ENCODE measurements at regions of chr9 and their contacts with region 1.

Region 1: GRCh38 chr9:129884220-129885017 is 49.2 kb downstream of the USP20 start:
- DNase-seq: peak; percentile 99
- ATAC-seq: peak; percentile 63
- H3K4me3 Mint-ChIP-seq: peak overlapping the region; percentile 92
- H3K27ac Mint-ChIP-seq: peak overlapping the region; percentile 98
- H3K4me1 Mint-ChIP-seq: peaks cover 45% of the 10 kb centered on the region
- H3K27me3 Mint-ChIP-seq: no peaks in the 10 kb centered on the region

Region 2: DNA sequence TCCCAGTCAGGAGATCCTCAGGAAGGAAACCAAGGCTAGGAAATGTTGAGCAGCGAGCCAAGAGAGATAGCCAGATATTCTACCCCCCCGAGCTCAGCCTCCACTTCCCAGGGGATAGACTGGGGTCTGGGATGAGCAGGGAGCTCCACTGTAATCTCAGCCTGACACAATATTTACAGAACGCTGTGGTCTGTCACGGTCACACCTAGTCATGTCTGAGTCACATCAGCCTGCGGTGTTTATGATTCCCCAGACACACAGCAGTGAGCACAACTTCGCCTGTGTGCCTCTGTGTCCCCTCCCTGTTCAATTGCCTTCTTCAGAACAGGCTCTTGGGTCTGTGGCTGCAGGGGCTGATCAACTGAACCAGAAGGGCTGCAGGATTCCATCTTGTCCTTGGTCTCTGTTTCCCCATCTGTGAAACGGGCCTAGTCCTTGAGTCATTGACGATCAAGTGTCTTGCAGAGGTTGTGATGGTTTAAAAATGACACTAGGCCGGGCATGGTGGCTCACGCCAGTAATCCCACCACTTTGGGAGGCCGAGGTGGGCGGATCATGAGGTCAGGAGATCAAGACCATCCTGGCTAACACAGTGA is 227.5 kb before region 1 on chr9:
- CTCF ChIA-PET with region 1: no interaction called
- DNase-seq: no peak
- ATAC-seq: peak; percentile 23
- H3K4me3 Mint-ChIP-seq: no peak overlapping the region
- H3K27ac Mint-ChIP-seq: no peak overlapping the region
- H3K4me1 Mint-ChIP-seq: no peaks in the 10 kb centered on the region
- H3K27me3 Mint-ChIP-seq: peaks cover 7% of the 10 kb centered on the region

Region 3: DNA sequence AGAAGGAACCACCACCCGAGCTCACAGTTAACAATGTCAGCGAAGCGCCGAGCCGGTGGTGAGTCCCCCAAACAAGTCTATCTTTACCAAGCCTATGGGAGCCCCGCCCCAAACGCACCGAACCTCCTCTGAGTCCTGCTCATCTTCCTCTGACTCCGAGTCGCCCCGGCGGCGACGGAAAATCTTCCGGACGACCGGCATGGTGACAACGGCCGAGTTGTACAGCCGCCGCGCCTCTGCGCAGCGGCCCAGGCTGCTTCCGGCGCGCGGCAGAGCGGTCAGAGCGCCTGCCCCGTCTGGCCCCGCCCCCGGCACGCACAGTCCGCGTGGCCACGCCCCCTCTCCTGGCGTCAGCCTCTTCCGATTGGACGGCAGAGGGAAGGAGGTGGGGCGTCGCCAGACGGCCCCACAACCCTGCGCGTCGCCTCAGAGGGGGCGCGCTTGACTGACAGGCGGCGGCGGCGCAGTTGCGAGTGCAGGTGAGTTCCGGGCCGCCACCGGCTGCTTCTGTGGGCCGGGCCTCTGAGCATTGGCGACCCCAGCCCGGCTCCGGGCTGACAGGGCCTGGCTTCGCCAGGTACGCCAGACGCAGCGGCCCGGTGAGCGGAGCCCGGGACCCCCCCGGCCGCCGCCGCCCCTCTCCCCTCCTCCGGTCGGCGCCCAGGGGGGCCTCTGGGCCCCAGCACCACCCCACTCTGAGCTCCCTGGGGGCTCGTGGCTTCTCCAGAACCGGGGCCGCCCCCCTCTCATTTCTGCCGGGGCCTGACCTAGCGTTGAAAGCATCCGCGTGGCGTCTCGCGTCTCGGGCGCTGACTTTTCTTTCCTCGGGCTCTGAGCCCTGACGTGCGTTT is 49.2 kb before region 1 on chr9 and contains the starts of genes C9orf78 and USP20:
- CTCF ChIA-PET with region 1: interaction called, 27 read pairs
- DNase-seq: peak; percentile 97
- ATAC-seq: peak; percentile 92
- H3K4me3 Mint-ChIP-seq: peak within 1 kb of the TSS; percentile 99
- H3K27ac Mint-ChIP-seq: peak within 1 kb of the TSS; percentile 98
- H3K4me1 Mint-ChIP-seq: peaks cover 60% of the 10 kb centered on the region
- H3K27me3 Mint-ChIP-seq: no peaks in the 10 kb centered on the region
- total RNA-seq, gene C9orf78: 77.7 to 90.2 TPM
- total RNA-seq, gene USP20: 114 to 155 TPM

Region 4: DNA sequence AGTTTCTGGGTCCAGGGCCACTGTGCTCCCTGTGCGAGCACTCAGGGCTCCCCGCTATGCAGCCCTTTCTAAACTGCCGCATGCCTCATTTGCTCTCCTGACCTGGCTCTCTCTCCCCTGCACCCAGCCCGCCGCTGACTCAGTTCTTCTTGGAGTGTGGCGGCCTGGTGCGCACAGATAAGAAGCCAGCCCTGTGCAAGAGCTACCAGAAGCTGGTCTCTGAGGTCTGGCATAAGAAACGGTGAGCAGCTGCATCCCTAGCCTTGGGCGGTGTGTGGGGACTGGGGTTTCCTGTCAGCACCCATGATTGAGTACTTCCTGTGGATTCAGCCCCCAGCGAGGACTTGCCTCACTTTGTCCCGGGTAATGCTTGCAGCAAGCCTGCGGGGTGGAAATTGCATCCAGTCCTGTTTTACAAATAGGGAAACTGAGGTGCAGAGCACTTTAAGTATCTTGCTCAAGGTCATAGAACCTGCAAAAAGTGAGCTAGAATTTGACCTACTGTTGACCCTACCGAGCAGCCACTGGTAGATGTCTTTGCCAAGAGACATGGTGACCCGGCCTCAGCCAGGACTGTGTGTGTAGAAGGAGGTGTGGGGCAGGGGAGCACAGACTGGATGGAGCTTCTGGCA is 21.2 kb before region 1 on chr9:
- CTCF ChIA-PET with region 1: interaction called, 110 read pairs
- DNase-seq: peak; percentile 97
- ATAC-seq: peak; percentile 81
- H3K4me3 Mint-ChIP-seq: peak overlapping the region; percentile 55
- H3K27ac Mint-ChIP-seq: peak overlapping the region; percentile 90
- H3K4me1 Mint-ChIP-seq: peaks cover 90% of the 10 kb centered on the region
- H3K27me3 Mint-ChIP-seq: no peaks in the 10 kb centered on the region

Region 5: GRCh38 chr9:129906298-129906697 is 21.9 kb after region 1 on chr9:
- CTCF ChIA-PET with region 1: no interaction called
- DNase-seq: no peak
- ATAC-seq: no peak
- H3K4me3 Mint-ChIP-seq: no peak overlapping the region
- H3K27ac Mint-ChIP-seq: peak overlapping the region; percentile 35
- H3K4me1 Mint-ChIP-seq: peaks cover 34% of the 10 kb centered on the region
- H3K27me3 Mint-ChIP-seq: no peaks in the 10 kb centered on the region

Region 6: GRCh38 chr9:129932303-129933151 is 48.1 kb after region 1 on chr9:
- CTCF ChIA-PET with region 1: interaction called, 10 read pairs
- DNase-seq: no peak
- ATAC-seq: peak; percentile 31
- H3K4me3 Mint-ChIP-seq: peak overlapping the region; percentile 62
- H3K27ac Mint-ChIP-seq: peak overlapping the region; percentile 88
- H3K4me1 Mint-ChIP-seq: peaks cover 60% of the 10 kb centered on the region
- H3K27me3 Mint-ChIP-seq: no peaks in the 10 kb centered on the region

Region 7: DNA sequence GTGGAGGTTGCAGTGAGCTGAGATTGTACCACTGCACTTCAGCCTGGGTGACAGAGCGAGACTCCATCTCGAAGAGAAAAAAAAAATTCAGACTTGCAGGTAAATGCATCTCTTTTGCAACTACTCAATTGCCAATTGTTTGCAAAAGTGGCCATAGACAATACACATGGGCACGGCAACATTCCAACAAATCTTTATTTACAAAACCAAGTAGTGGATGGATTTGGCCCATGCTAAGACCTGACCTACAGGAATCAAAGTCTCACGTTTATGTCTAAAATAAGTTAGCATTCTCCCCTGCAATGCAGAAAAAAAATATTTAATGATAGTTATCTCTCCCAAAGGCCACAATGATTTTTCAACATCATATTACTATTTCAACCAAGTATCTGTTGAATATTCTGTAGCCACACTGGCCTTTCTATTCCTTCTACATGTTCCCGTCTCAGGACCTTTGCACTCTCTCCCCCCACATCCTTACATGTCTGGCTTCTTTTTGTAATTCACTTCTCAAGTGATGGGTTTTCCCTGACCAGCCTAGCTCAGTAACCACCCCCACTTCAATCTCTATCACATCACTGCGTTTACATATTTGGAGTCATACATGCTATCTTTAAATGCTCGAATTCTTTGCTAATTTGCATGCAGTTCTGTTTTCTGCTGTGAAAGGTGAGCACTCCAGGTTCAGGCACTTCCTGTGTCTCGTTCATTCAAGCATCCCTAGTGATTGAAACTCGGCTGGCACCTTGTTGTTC is 104.4 kb after region 1 on chr9:
- CTCF ChIA-PET with region 1: interaction called, 10 read pairs
- DNase-seq: no peak
- ATAC-seq: no peak
- H3K4me3 Mint-ChIP-seq: no peak overlapping the region
- H3K27ac Mint-ChIP-seq: peak overlapping the region; percentile 73
- H3K4me1 Mint-ChIP-seq: peaks cover 71% of the 10 kb centered on the region
- H3K27me3 Mint-ChIP-seq: no peaks in the 10 kb centered on the region

Region 8: DNA sequence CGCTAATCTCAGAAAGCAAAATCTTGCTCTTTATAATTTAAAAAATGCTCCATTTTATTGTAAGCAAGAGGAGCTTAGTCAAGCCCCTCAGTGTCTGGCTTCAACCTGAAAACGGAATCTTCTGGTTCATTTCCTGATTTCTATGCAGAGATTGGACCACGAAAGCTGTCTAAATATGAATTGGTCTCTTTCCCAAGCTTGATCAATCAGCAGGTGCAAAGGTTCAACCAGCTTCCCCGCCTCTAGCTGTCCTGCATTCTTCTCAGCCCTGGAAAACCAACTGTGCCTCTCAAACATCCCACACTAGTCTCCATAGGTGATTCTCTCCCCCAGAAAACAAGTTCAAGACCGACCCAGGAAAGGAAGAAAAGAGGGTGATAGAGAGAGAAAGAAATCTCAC is 124.1 kb after region 1 on chr9:
- CTCF ChIA-PET with region 1: interaction called, 11 read pairs
- DNase-seq: no peak
- ATAC-seq: no peak
- H3K4me3 Mint-ChIP-seq: peak overlapping the region; percentile 4
- H3K27ac Mint-ChIP-seq: peak overlapping the region; percentile 94
- H3K4me1 Mint-ChIP-seq: peaks cover 69% of the 10 kb centered on the region
- H3K27me3 Mint-ChIP-seq: no peaks in the 10 kb centered on the region

Region 9: GRCh38 chr9:130042833-130043653 is 158.6 kb after region 1 on chr9 and contains the start of gene FNBP1:
- CTCF ChIA-PET with region 1: interaction called, 20 read pairs
- DNase-seq: peak; percentile 83
- ATAC-seq: peak; percentile 60
- H3K4me3 Mint-ChIP-seq: peak within 1 kb of the TSS; percentile 98
- H3K27ac Mint-ChIP-seq: peak within 1 kb of the TSS; percentile 97
- H3K4me1 Mint-ChIP-seq: peaks cover 45% of the 10 kb centered on the region
- H3K27me3 Mint-ChIP-seq: no peaks in the 10 kb centered on the region
- total RNA-seq, gene FNBP1: 153 to 167 TPM

Measured in activated CD8-positive, alpha-beta memory T cell treated with anti-CD3 and anti-CD28 coated beads, Interleukin-2, amount 10 ng/mL, durations not matched to agents 7 days and 5 days (primary cell).